ENCODE measurements at regions of chr22 and their contacts with region 1.

Region 1: GRCh38 chr22:37599153-37599552 is 9.5 kb upstream of the GGA1 start:
- DNase-seq: no peak
- H3K4me3 ChIP-seq: no peak overlapping the region
- H3K27ac ChIP-seq: no peak overlapping the region
- H3K4me1 ChIP-seq: no peaks in the 10 kb centered on the region
- H3K27me3 ChIP-seq: no peaks in the 10 kb centered on the region
- CTCF ChIP-seq: no peak
- POLR2A ChIP-seq: no peak

Region 2: GRCh38 chr22:37316875-37317371 is 282.2 kb before region 1 on chr22:
- intact Hi-C with region 1: loop called (anchors 10 kb)
- DNase-seq: peak; percentile 54 to 56
- H3K4me3 ChIP-seq: no peak overlapping the region
- H3K27ac ChIP-seq: no peak overlapping the region
- H3K4me1 ChIP-seq: no peaks in the 10 kb centered on the region
- H3K27me3 ChIP-seq: no peaks in the 10 kb centered on the region
- CTCF ChIP-seq: peak; percentile 57 to 90 (median 73)
- POLR2A ChIP-seq: no peak

Region 3: DNA sequence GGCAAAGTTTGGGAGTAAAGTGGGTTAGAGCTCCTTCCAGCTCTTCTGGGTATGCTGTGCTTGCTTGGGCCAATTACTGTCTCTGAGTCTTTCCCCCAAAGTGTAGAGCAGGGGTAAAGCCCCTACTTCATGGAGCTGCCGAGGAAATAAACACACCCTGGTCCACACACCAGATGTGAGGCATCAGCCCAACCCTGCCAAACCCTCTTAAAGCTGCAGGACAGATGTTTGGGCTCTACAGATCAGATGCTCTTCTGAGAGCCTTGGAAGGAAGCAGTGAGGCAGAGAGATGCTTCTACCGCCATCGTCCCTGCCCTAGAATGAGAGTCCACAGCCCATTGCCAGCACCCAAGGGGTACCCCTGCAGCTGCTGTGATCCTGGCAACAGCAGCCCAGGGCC is 236.5 kb before region 1 on chr22:
- intact Hi-C with region 1: no loop called
- DNase-seq: no peak
- H3K4me3 ChIP-seq: no peak overlapping the region
- H3K27ac ChIP-seq: no peak overlapping the region
- H3K4me1 ChIP-seq: no peaks in the 10 kb centered on the region
- H3K27me3 ChIP-seq: no peaks in the 10 kb centered on the region
- CTCF ChIP-seq: no peak
- POLR2A ChIP-seq: no peak

Region 4: GRCh38 chr22:37533995-37534394 is 65.2 kb before region 1 on chr22:
- intact Hi-C with region 1: no loop called
- DNase-seq: no peak
- H3K4me3 ChIP-seq: no peak overlapping the region
- H3K27ac ChIP-seq: no peak overlapping the region
- H3K4me1 ChIP-seq: no peaks in the 10 kb centered on the region
- H3K27me3 ChIP-seq: no peaks in the 10 kb centered on the region
- CTCF ChIP-seq: no peak
- POLR2A ChIP-seq: no peak

Region 5: GRCh38 chr22:37544955-37545699 is 54.0 kb before region 1 on chr22:
- intact Hi-C with region 1: loop called (anchors 10 kb)
- DNase-seq: peak; percentile 77 to 78
- H3K4me3 ChIP-seq: peak overlapping the region; percentile 10 to 27
- H3K27ac ChIP-seq: peak overlapping the region; percentile 97 to 98
- H3K4me1 ChIP-seq: peaks cover 0 to 24% of the 10 kb centered on the region in 2 donors
- H3K27me3 ChIP-seq: no peaks in the 10 kb centered on the region
- CTCF ChIP-seq: peak; percentile 64 to 82 (median 71)
- POLR2A ChIP-seq: no peak

Measured in uterus (tissue), 4 donors.